ENCODE measurements at regions of chr4 and their contacts with region 1.

Region 1: GRCh38 chr4:122602277-122603142 is 18.4 kb downstream of the IL21 start:
- DNase-seq: peak; percentile 73
- H3K4me3 Mint-ChIP-seq: peak overlapping the region; percentile 72
- H3K27ac Mint-ChIP-seq: peak overlapping the region; percentile 77
- H3K4me1 Mint-ChIP-seq: peaks cover 28% of the 10 kb centered on the region
- H3K27me3 Mint-ChIP-seq: no peaks in the 10 kb centered on the region

Region 2: DNA sequence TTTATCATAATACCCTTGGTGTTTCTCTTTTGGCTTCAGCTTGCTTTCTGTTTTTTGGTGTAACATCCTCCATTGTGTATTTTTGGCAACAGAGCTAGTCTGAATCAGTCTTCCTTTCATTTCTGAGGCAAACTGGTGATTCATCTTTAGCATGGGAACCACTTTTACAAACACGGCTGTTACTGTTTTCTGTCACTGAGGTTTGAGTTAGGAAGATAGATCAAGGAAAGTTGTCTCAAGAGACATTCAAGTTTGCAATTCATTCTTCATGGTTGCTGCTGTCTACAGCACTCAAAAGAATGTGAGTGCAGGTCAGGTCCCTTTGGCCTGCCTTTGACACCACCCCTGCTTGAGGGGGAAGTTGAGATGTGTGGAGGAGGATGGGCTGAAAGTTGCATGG is 18.0 kb before region 1 on chr4:
- intact Hi-C with region 1: loop called (anchors 2 kb)
- DNase-seq: peak; percentile 81
- H3K4me3 Mint-ChIP-seq: peak overlapping the region; percentile 64
- H3K27ac Mint-ChIP-seq: peak overlapping the region; percentile 95
- H3K4me1 Mint-ChIP-seq: peaks cover 53% of the 10 kb centered on the region
- H3K27me3 Mint-ChIP-seq: no peaks in the 10 kb centered on the region

Region 3: DNA sequence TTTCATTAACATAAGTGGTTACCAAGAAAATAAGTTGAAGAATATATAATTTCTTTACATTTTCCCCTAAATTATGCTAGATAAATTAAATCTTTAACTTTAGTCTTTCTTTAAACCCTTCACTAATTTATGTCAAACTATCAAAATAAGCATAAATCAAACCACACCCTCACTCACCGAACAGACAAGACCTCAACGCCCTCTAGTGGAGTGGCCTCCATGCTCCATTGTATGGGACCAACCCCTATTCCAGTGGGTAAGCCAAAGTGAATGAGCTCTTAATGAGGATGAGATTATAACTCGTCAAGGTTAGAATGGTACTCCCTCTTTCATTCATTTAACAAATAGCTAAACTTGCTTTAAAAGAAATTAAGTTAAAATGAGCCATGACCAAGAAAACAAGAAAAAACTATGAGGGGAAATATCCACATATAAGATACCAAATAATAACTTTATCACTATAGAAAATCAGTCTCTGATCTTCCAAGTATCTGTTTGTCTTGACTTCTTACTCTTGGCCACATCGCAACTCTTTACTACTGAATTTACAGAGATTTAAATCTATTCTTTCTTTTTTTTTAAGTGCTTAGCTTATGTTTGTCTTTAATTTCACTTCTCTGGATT is 114.4 kb after region 1 on chr4:
- intact Hi-C with region 1: loop called (anchors 1 kb)
- DNase-seq: peak; percentile 92
- H3K4me3 Mint-ChIP-seq: no peak overlapping the region
- H3K27ac Mint-ChIP-seq: peak overlapping the region; percentile 36
- H3K4me1 Mint-ChIP-seq: peaks cover 28% of the 10 kb centered on the region
- H3K27me3 Mint-ChIP-seq: no peaks in the 10 kb centered on the region

Region 4: DNA sequence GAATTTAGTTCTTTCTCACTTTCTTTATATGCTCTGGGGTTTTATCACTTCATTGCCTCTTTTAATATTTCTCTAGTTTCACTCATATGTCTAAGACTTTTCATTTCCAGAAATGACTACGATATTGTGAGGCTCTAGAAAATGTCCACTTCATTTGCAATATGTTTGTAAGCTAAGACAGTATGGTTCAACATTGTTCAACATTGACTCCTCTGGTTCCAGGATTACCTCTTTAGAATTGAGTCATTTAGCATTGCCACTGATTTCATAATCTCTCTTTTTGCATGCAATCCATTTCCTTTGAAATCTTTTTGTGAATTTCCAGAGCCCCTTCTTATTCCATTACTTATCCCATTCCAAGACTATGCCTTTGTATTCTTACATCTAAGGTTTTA is 162.3 kb after region 1 on chr4:
- intact Hi-C with region 1: loop called (anchors 1 kb)
- DNase-seq: no peak
- H3K4me3 Mint-ChIP-seq: peak overlapping the region; percentile 49
- H3K27ac Mint-ChIP-seq: peak overlapping the region; percentile 81
- H3K4me1 Mint-ChIP-seq: peaks cover 33% of the 10 kb centered on the region
- H3K27me3 Mint-ChIP-seq: no peaks in the 10 kb centered on the region

Region 5: GRCh38 chr4:122922877-122923511 is 320.5 kb after region 1 on chr4:
- intact Hi-C with region 1: loop called (anchors 1 kb)
- DNase-seq: peak; percentile 97
- H3K4me3 Mint-ChIP-seq: no peak overlapping the region
- H3K27ac Mint-ChIP-seq: peak overlapping the region; percentile 96
- H3K4me1 Mint-ChIP-seq: peaks cover 24% of the 10 kb centered on the region
- H3K27me3 Mint-ChIP-seq: no peaks in the 10 kb centered on the region

Region 6: GRCh38 chr4:122978109-122978508 is 375.6 kb after region 1 on chr4:
- intact Hi-C with region 1: no loop called
- DNase-seq: no peak
- H3K4me3 Mint-ChIP-seq: no peak overlapping the region
- H3K27ac Mint-ChIP-seq: no peak overlapping the region
- H3K4me1 Mint-ChIP-seq: no peaks in the 10 kb centered on the region
- H3K27me3 Mint-ChIP-seq: no peaks in the 10 kb centered on the region

Measured in activated CD4-positive, alpha-beta T cell treated with anti-CD3 and anti-CD28 coated beads, Interleukin-2, amount 10 ng/mL, durations not matched to agents 24 days and 14 days (primary cell).